ENCODE measurements at regions of chr1 and their contacts with region 1.

Region 1: DNA sequence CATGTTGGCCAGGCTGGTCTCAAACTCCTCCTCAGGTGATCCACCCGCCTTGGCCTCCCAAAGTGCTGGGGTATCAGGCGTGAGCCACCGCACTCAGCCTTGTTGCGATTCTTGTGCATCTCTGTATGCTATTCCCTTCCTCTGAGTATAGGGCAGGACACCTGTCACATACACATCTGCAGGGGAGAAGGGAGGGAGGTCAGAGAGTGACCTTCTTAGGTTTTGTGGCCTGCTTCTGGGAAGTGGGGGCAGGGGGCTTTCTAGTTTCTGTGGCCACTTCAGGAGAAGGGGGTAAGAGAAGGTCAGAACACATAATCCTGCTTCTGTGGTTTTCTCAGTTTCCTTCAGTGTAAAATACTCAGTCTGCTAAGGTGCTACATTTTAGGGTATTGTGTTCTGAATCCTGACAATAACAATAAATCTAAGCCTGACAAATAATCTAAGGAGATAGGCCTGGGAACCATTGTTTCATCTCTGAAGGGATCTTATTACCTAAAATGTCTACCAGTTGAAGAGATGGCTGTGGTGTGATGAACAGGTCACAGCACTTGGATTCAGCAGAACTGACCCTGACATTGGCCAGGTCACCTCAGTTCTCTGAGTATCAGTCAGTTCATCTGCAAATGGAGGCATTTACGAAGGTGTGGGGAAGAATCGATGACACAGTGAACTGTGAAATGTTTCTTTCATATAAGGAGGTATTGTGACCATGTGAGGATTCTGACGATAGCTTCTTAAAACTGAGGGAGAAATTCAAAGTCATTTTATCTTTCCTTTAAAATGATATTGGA is 212.6 kb upstream of the L1TD1 start:
- DNase-seq: no peak
- ATAC-seq: no peak
- H3K4me3 ChIP-seq: no peak overlapping the region
- H3K27ac ChIP-seq: no peak overlapping the region
- H3K4me1 ChIP-seq: no peaks in the 10 kb centered on the region
- H3K27me3 ChIP-seq: no peaks in the 10 kb centered on the region
- CTCF ChIP-seq: no peak

Region 2: DNA sequence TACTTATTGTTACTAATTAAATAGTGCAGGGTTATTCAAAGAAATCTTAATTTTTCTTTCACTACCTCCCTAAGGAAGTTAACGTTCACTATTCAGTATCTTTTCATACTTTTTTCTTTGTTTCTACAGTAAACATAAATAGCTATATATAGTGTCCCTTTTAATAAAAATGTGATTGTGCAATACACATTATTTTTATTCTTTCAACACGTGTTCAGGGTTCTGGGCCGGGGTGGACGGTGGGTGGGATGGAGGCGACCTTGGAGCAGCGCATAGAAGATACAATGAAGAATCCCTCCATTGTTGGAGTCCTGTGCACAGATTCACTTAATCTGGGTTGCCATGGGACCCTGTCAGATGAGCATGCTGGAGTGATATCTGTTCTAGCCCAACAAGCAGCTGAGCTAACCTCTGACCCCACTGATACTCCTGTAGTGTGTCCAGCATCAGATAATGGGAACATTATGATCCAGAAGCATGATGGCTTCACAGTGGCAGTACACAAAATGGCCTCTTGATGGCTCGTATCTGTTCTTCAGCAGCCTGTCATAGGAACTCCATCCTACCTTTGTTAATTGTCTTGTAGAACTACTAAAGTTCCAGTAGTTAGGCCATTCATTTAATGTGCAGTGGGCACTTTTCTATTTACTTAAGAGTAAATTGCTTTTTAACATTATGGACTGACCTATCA is 56.7 kb after region 1 on chr1:
- CTCF ChIA-PET with region 1: interaction called, 10 read pairs
- POLR2A ChIA-PET with region 1: no interaction called
- in situ Hi-C with region 1: no loop called
- intact Hi-C with region 1: no loop called
- DNase-seq: no peak
- ATAC-seq: peak; percentile 72; the same call in 1 of the 2 replicates
- H3K4me3 ChIP-seq: no peak overlapping the region
- H3K27ac ChIP-seq: no peak overlapping the region
- H3K4me1 ChIP-seq: no peaks in the 10 kb centered on the region
- H3K27me3 ChIP-seq: no peaks in the 10 kb centered on the region
- CTCF ChIP-seq: peak; percentile 32; the same call in 1 of the 2 replicates

Measured in Panc1 (cell line).